Activated naive CD8-positive, alpha-beta T cell treated with anti-CD3 and anti-CD28 coated beads, Interleukin-2, amount 10 ng/mL, durations not matched to agents 7 days and 5 days (primary cell): ENCODE measurements at regions of chr12 and their contacts with region 1.

Region 1: DNA sequence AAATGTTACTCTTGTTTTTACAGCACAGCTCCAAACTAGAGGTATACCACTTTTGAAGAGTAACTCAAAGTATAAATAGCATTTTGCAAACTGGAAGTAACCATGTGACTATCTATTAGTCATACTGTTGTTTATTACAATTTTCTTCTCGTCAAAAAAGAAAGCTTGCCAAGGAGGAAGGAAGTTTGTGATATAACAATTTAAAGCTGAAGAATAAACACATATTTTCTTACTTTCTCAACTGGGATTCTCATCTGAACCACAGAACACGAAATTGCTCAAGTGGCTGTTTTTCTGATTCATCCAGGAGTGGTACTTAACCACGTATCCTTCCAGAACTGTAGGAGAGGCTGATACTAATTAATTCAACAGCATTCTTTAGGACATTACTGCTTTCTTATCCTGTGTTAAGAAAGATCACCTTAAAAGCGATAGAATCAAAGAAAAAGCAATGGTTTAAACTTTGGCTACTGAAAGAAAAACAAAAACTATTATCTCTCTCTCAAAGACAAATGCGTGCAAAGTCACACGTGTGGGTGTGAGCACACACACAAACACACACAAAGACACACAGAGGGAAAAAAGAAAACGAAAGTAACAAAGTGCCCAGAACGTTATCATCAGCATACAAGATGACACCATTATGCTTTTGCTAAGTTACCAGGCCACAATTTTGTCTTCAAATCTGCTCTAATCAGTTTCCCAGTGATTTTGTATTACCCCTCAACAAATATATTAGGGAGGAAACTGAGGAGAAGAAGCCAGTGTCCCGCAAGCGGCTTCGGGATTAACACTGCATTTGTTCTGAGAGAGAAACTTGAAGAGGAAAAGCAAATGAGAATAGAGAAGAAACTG is at the start of gene CLEC2B:
- DNase-seq: no peak
- ATAC-seq: peak; percentile 58
- H3K4me3 Mint-ChIP-seq: peak within 1 kb of the TSS; percentile 85
- H3K27ac Mint-ChIP-seq: peak within 1 kb of the TSS; percentile 92
- H3K4me1 Mint-ChIP-seq: peaks cover 18% of the 10 kb centered on the region
- H3K27me3 Mint-ChIP-seq: no peaks in the 10 kb centered on the region
- total RNA-seq, gene CLEC2B: 83.9 to 89.7 TPM

Region 2: GRCh38 chr12:9662500-9662899 is 207.0 kb before region 1 on chr12:
- POLR2A ChIA-PET with region 1: no interaction called
- DNase-seq: no peak
- ATAC-seq: peak; percentile 48
- H3K4me3 Mint-ChIP-seq: peak overlapping the region; percentile 42
- H3K27ac Mint-ChIP-seq: peak overlapping the region; percentile 48
- H3K4me1 Mint-ChIP-seq: peaks cover 61% of the 10 kb centered on the region
- H3K27me3 Mint-ChIP-seq: no peaks in the 10 kb centered on the region

Region 3: GRCh38 chr12:9673404-9674225 is 195.9 kb before region 1 on chr12:
- POLR2A ChIA-PET with region 1: interaction called, 10 read pairs
- DNase-seq: peak; percentile 74
- ATAC-seq: peak; percentile 39
- H3K4me3 Mint-ChIP-seq: peak overlapping the region; percentile 95
- H3K27ac Mint-ChIP-seq: peak overlapping the region; percentile 99
- H3K4me1 Mint-ChIP-seq: peaks cover 62% of the 10 kb centered on the region
- H3K27me3 Mint-ChIP-seq: no peaks in the 10 kb centered on the region

Region 4: GRCh38 chr12:9813821-9814809 is 55.4 kb before region 1 on chr12:
- POLR2A ChIA-PET with region 1: interaction called, 29 read pairs
- DNase-seq: peak; percentile 97
- ATAC-seq: peak; percentile 98
- H3K4me3 Mint-ChIP-seq: peak overlapping the region; percentile 87
- H3K27ac Mint-ChIP-seq: peak overlapping the region; percentile 92
- H3K4me1 Mint-ChIP-seq: peaks cover 24% of the 10 kb centered on the region
- H3K27me3 Mint-ChIP-seq: peaks cover 7% of the 10 kb centered on the region

Region 5: GRCh38 chr12:9906873-9907272 is 37.3 kb after region 1 on chr12:
- POLR2A ChIA-PET with region 1: interaction called, 19 read pairs
- DNase-seq: no peak
- ATAC-seq: peak; percentile 98
- H3K4me3 Mint-ChIP-seq: peak overlapping the region; percentile 79
- H3K27ac Mint-ChIP-seq: peak overlapping the region; percentile 89
- H3K4me1 Mint-ChIP-seq: peaks cover 30% of the 10 kb centered on the region
- H3K27me3 Mint-ChIP-seq: no peaks in the 10 kb centered on the region

Region 6: DNA sequence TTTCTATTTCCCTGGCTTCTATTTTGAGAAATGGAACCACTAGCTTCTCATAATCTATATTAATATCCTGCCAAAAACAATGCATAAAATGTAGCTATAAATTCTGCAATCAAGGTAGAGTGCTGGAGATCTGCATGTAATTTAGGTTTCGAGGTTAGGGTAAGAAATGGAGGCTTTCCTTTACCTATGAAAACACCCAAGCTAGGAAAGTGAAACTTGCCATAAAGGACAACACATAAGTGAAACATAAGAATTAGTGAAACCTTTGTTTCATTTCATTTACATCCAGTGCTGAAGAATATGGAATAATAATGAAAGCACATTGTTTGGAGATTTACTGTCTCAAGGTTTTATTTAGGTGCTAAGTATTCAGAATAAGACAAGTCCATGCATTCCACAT is 52.9 kb after region 1 on chr12:
- POLR2A ChIA-PET with region 1: interaction called, 12 read pairs
- DNase-seq: no peak
- ATAC-seq: peak; percentile 65
- H3K4me3 Mint-ChIP-seq: peak overlapping the region; percentile 65
- H3K27ac Mint-ChIP-seq: peak overlapping the region; percentile 87
- H3K4me1 Mint-ChIP-seq: peaks cover 19% of the 10 kb centered on the region
- H3K27me3 Mint-ChIP-seq: peaks cover 3% of the 10 kb centered on the region

Region 7: DNA sequence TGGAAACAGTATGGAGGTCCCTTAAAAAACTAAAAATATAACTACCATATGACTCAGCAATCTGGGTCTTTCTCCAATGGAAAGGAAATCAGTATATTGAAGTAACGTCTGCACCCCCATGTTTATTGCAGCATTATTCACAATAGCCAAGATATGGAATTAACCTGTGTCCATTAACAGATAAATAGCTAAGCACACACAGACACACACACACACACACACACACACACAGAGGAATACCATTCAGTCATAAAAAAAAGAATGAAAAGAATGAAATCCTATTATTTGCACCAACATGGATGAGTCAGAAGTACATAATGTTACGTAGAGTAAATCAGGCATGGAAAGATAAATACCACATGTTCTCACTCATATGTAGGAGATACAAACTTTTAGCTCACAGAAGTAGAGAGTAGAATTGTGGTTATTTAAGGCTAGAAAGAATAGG is 515.7 kb after region 1 on chr12:
- POLR2A ChIA-PET with region 1: interaction called, 22 read pairs
- DNase-seq: no peak
- ATAC-seq: peak; percentile 43
- H3K4me3 Mint-ChIP-seq: peak overlapping the region; percentile 84
- H3K27ac Mint-ChIP-seq: peak overlapping the region; percentile 88
- H3K4me1 Mint-ChIP-seq: peaks cover 61% of the 10 kb centered on the region
- H3K27me3 Mint-ChIP-seq: no peaks in the 10 kb centered on the region

Region 8: DNA sequence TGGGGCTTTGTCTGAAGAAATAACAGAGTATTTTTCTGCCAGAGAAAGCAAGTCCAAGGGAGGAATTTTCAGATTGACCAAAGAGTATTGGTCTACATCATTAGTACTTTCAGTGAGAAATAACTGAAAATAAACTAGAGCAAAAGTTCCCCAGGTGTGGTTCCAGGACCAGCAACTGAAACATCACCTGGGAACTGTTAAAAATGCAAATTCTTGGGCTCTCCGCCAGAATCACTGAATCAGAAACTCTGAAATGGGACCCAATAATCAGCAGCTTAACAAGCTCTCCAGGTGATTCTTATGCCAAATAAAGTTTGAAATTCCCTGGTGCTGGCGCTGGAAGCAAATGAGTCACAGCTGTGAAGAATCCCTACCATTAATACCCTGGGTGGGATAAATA is 688.2 kb after region 1 on chr12:
- POLR2A ChIA-PET with region 1: interaction called, 26 read pairs
- DNase-seq: no peak
- ATAC-seq: no peak
- H3K4me3 Mint-ChIP-seq: peak overlapping the region; percentile 88
- H3K27ac Mint-ChIP-seq: peak overlapping the region; percentile 91
- H3K4me1 Mint-ChIP-seq: peaks cover 46% of the 10 kb centered on the region
- H3K27me3 Mint-ChIP-seq: no peaks in the 10 kb centered on the region